WTC11 (cell line): ENCODE measurements at regions of chr6 and their contacts with region 1.

Region 1: DNA sequence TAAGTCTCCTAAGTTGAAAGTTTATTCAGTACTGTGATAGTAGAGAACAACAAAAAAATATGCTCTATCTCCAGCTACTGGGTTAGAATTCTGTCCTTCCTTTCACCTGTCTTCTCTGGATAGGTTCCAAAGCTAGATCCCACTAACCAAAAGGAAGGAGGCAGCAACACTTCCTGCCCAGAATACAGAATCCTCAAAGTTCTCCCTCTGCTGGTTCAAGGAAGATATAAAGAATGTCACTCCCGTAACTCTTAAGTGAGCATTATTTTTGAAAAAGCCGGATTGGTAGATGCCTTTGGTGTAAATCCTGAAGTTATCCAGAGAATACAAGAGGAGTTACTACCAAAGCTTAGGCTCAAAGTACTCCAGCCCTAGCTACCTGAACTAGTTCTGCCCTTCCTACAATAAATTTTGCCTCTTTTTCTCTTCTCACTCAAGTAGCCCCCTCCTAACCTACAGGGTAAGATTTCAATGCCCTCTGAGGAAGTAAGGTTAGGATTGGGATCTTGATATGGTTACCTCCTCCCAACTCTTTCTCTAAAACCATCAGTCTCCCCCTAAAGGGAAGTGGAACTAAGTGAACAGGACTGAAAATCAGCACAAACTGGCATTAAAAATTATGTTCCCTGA is 26.0 kb upstream of the CRIP3 start:
- DNase-seq: no peak
- ATAC-seq: peak; percentile 97
- H3K4me3 Mint-ChIP-seq: no peak overlapping the region
- H3K27ac Mint-ChIP-seq: peak overlapping the region; percentile 50; the same call in 1 of the 2 replicates
- H3K4me1 Mint-ChIP-seq: 0 out of 2 replicates have a peak, but pooled peaks cover 4% of the 10 kb centered on the region
- H3K27me3 Mint-ChIP-seq: no peaks in the 10 kb centered on the region; the same call in 1 of the 2 replicates
- CTCF ChIP-seq: no peak

Region 2: GRCh38 chr6:43263314-43264178 is 71.0 kb before region 1 on chr6:
- CTCF ChIA-PET with region 1: interaction called, 20 read pairs
- POLR2A ChIA-PET with region 1: no interaction called
- DNase-seq: peak; percentile 90
- ATAC-seq: peak; percentile 87
- H3K4me3 Mint-ChIP-seq: no peak overlapping the region
- H3K27ac Mint-ChIP-seq: peak overlapping the region; percentile 28; the same call in 1 of the 2 replicates
- H3K4me1 Mint-ChIP-seq: peaks cover 24% of the 10 kb centered on the region
- H3K27me3 Mint-ChIP-seq: peaks cover 14% of the 10 kb centered on the region
- CTCF ChIP-seq: peak; percentile 60; the same call in 1 of the 2 replicates

Region 3: DNA sequence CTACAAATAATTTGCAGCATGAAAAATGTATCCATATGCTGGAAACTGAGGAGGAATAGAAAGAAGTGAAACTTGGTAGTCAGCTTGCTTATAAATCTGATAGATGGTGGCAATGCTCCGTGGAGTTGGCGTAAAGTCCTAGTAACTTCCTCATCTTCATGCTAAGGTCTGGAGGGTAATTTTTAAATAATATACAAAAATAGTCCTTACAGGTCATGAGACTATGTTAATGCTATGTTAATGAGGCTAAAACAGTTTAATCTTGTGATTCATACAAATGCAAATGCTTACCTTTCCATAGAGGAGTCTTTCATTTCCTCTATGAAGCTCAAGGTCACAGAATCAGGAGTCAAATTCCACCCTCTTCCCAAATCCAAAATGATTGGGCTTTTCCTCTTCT is 16.6 kb before region 1 on chr6:
- CTCF ChIA-PET with region 1: interaction called, 19 read pairs
- POLR2A ChIA-PET with region 1: no interaction called
- DNase-seq: no peak
- ATAC-seq: no peak
- H3K4me3 Mint-ChIP-seq: no peak overlapping the region
- H3K27ac Mint-ChIP-seq: no peak overlapping the region
- H3K4me1 Mint-ChIP-seq: peaks cover 22% of the 10 kb centered on the region
- H3K27me3 Mint-ChIP-seq: no peaks in the 10 kb centered on the region; the same call in 1 of the 2 replicates
- CTCF ChIP-seq: no peak

Region 4: GRCh38 chr6:43355862-43356590 is 21.4 kb after region 1 on chr6:
- CTCF ChIA-PET with region 1: interaction called, 15 read pairs
- POLR2A ChIA-PET with region 1: no interaction called
- DNase-seq: peak; percentile 22
- ATAC-seq: peak; percentile 99
- H3K4me3 Mint-ChIP-seq: no peak overlapping the region
- H3K27ac Mint-ChIP-seq: peak overlapping the region; percentile 24
- H3K4me1 Mint-ChIP-seq: peaks cover 23% of the 10 kb centered on the region
- H3K27me3 Mint-ChIP-seq: no peaks in the 10 kb centered on the region
- CTCF ChIP-seq: no peak

Region 5: GRCh38 chr6:43506667-43507471 is 172.3 kb after region 1 on chr6:
- CTCF ChIA-PET with region 1: interaction called, 12 read pairs
- POLR2A ChIA-PET with region 1: no interaction called
- DNase-seq: peak; percentile 81
- ATAC-seq: peak; percentile 63
- H3K4me3 Mint-ChIP-seq: no peak overlapping the region
- H3K27ac Mint-ChIP-seq: no peak overlapping the region
- H3K4me1 Mint-ChIP-seq: peaks cover 17% of the 10 kb centered on the region
- H3K27me3 Mint-ChIP-seq: peaks cover 28% of the 10 kb centered on the region
- CTCF ChIP-seq: peak; percentile 97